GM23248 (cell line): ENCODE measurements at regions of chr3 and their contacts with region 1.

Region 1: DNA sequence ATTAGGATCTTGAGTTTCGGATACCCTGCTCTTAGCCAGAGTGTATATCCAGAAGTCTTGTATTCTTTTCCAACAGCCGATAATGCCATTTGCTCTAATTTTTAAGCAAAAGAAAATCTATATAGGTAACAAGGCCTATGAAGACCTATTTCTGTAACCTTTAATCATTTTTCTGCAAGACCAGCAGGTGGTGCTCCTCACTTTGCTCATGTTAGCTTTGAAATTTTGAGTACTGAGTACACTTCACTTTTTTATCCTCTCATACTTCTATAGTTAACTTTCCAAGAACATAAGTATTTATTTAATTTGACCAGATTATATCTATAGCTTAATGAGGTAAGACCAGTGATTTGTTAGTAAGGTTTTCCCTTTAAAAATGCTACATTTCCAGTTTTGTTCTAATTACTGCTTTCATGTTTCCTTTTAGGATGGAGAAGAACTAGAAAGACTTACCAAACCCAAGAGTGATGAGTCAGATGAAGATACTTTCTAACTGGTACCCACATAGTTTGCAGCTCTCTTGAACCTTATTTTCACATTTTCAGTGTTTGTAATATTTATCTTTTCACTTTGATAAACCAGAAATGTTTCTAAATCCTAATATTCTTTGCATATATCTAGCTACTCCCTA is 20.5 kb downstream of the SLC35A5 start:
- DNase-seq: peak; percentile 78
- H3K4me3 ChIP-seq: no peak overlapping the region
- H3K27ac ChIP-seq: no peak overlapping the region
- H3K4me1 ChIP-seq: peaks cover 29% of the 10 kb centered on the region
- H3K27me3 ChIP-seq: no peaks in the 10 kb centered on the region

Region 2: DNA sequence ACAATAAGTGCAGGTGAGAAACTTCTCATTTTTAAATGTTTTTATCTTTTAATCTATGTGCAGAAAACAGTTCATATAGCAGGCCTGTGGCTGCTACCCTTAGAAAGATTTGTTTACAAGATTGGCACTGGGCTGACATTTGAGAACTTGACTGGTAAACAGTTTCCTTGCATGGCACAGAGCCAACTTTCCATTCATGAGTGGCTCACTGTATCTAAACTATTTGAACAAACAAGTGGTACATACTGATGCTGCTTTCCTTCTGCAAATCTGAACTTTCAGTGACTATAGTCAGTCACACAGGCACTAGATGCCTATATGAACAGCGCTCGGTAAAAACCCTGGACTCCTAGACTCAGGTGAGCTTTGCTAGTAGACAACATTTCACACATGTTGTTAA is 402.1 kb after region 1 on chr3:
- in situ Hi-C with region 1: loop called (anchors 10 kb)
- DNase-seq: no peak
- H3K4me3 ChIP-seq: no peak overlapping the region
- H3K27ac ChIP-seq: no peak overlapping the region
- H3K4me1 ChIP-seq: no peaks in the 10 kb centered on the region
- H3K27me3 ChIP-seq: no peaks in the 10 kb centered on the region